Motor neuron (in vitro differentiated cells): ENCODE measurements at regions of chr11 and their contacts with region 1.

Region 1: DNA sequence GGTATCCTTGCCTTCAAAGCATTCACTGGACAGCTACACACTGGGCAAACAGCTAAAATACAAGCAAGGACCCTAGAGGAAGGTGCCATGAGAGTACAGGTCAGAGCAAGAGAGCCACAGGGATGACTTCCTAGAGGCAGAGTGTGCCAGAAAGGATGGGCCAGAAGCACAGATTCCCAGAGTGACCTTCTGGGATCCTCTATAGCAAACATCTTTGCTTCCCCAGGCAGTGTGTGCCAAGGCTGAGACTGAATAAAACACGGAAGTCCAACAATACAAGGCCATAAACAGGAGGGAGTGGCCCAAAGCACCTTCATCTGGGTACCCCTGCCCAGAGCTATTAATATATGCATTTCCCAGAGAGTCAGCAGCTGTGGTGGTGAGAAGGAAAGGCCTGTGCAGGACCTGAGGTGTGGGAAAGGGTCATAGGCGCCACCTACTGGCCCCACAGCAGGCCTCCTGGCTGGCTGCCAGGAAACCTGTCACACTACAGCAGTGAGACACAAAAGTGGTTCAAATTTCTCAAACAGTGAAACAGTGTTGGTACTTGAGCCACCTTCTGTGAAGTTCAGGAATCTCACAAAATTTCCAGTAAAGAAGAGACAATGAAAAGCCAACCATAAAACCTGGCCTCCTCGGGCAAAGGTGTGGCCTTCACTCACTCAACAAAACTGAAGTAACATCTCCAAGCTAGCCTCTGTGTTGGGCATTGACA is 20.3 kb downstream of the CLPB start:
- ATAC-seq: peak; percentile 89 to 99 (median 94)
- H3K4me3 ChIP-seq: no peak overlapping the region
- H3K27ac ChIP-seq: no peak overlapping the region
- H3K4me1 ChIP-seq: peaks cover 16 to 21% of the 10 kb centered on the region in 2 donors

Region 2: GRCh38 chr11:72015511-72016171 is 398.4 kb before region 1 on chr11:
- in situ Hi-C with region 1: loop called in 2 of 9 experiments (anchors 25 kb)
- ATAC-seq: peak in 6 of 8 experiments; percentile 51 to 87 (median 78)
- H3K4me3 ChIP-seq: no peak overlapping the region
- H3K27ac ChIP-seq: no peak overlapping the region
- H3K4me1 ChIP-seq: no peaks in the 10 kb centered on the region

Region 3: DNA sequence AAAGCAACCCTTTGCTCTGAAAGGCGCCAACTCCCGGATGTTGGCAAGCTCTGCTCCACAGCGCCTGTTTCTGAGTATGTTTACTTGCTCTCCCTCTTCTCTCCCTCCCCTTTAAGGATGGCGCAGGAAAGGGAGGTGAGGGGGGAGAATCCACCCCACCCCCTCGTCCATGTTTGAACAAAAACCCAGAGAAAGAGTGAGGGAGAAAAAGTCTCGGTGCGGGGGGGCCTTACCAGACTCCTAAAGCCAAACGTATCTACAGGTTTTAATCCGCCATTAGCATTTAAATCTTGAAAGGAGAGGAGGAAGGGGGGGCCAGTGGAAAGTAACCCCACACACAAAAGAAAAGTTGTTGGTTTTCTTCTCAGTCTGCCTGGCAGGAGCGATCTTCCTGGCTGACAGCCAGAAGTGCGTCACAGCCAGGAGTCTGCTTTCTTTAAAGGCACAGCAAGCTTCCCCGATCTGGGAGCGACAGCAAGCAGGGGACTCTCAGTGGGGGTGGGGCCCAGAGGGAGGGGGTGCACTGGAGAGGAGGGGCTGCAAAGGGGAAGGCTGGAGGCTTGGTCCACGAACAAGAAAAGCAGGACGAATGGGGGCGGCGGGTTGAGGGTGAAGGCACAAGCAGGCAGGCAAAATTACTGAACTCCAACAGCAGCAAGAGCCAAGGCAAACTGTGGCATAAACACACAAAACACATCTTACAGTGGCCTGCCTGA is 373.2 kb before region 1 on chr11:
- in situ Hi-C with region 1: loop called in 2 of 9 experiments (anchors 25 kb)
- ATAC-seq: peak; percentile 61 to 81 (median 74)
- H3K4me3 ChIP-seq: peak overlapping the region; percentile 38 to 65 (median 49)
- H3K27ac ChIP-seq: peak overlapping the region; percentile 93 to 95
- H3K4me1 ChIP-seq: peaks cover 41 to 44% of the 10 kb centered on the region in 2 donors

Region 4: GRCh38 chr11:72238040-72238450 is 176.0 kb before region 1 on chr11:
- in situ Hi-C with region 1: loop called in 1 of 9 experiments (anchors 25 kb)
- ATAC-seq: peak; percentile 24 to 71 (median 60)
- H3K4me3 ChIP-seq: no peak overlapping the region
- H3K27ac ChIP-seq: no peak overlapping the region
- H3K4me1 ChIP-seq: peaks cover 16 to 20% of the 10 kb centered on the region in 2 donors

Region 5: GRCh38 chr11:72962084-72962483 is 548.0 kb after region 1 on chr11:
- in situ Hi-C with region 1: no loop called
- ATAC-seq: no peak
- H3K4me3 ChIP-seq: no peak overlapping the region
- H3K27ac ChIP-seq: no peak overlapping the region
- H3K4me1 ChIP-seq: no peaks in the 10 kb centered on the region